WTC11 (cell line): ENCODE measurements at regions of chr14 and their contacts with region 1.

Region 1: GRCh38 chr14:103141119-103141796 is 18.0 kb downstream of the TNFAIP2 start:
- DNase-seq: peak; percentile 90
- ATAC-seq: peak; percentile 63
- H3K4me3 Mint-ChIP-seq: peak overlapping the region; percentile 33; the same call in 1 of the 2 replicates
- H3K27ac Mint-ChIP-seq: no peak overlapping the region
- H3K4me1 Mint-ChIP-seq: peaks cover 31% of the 10 kb centered on the region
- H3K27me3 Mint-ChIP-seq: peaks cover 21% of the 10 kb centered on the region
- CTCF ChIP-seq: peak; percentile 77

Region 2: DNA sequence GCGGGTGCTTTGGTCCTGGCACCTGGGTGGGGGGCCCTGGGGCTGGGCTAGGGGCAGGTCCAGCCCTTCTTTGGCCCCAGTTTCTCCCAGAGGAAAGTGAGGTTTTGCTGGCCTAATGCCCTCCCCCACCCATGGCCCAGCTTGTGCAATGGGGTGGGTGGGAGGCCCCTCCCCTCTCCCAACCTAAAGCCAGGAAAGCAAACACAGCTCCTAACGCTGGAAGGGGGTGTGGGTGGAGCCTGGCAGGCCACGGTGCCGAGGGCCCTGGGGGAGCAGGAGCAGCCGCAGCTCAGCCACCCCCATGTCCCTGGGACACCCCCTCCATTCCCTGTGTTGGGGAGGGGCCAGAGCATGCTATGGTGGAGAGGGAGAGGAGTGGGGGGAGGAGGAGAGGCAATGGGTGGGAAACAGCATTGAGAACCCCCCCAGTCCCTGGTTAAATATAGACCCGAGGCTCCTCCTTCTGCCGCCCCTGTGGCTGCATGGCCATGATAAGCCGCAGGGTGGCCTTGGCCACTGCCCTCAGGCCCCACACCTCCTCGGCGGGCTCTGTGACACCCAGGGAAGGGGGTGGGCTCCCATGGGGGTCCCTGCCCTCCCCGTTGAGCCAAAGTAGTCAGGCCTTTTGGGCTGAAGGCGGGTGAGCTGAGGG is 42.1 kb before region 1 on chr14:
- CTCF ChIA-PET with region 1: interaction called, 126 read pairs
- POLR2A ChIA-PET with region 1: no interaction called
- DNase-seq: peak; percentile 16
- ATAC-seq: peak; percentile 29
- H3K4me3 Mint-ChIP-seq: no peak overlapping the region
- H3K27ac Mint-ChIP-seq: no peak overlapping the region
- H3K4me1 Mint-ChIP-seq: peaks cover 15% of the 10 kb centered on the region
- H3K27me3 Mint-ChIP-seq: peaks cover 38% of the 10 kb centered on the region
- CTCF ChIP-seq: no peak

Region 3: GRCh38 chr14:103130965-103131364 is 10.3 kb before region 1 on chr14:
- CTCF ChIA-PET with region 1: interaction called, 32 read pairs
- POLR2A ChIA-PET with region 1: interaction called, 5 read pairs
- DNase-seq: no peak
- ATAC-seq: no peak
- H3K4me3 Mint-ChIP-seq: no peak overlapping the region
- H3K27ac Mint-ChIP-seq: no peak overlapping the region
- H3K4me1 Mint-ChIP-seq: peaks cover 15% of the 10 kb centered on the region
- H3K27me3 Mint-ChIP-seq: peaks cover 19% of the 10 kb centered on the region
- CTCF ChIP-seq: no peak

Region 4: DNA sequence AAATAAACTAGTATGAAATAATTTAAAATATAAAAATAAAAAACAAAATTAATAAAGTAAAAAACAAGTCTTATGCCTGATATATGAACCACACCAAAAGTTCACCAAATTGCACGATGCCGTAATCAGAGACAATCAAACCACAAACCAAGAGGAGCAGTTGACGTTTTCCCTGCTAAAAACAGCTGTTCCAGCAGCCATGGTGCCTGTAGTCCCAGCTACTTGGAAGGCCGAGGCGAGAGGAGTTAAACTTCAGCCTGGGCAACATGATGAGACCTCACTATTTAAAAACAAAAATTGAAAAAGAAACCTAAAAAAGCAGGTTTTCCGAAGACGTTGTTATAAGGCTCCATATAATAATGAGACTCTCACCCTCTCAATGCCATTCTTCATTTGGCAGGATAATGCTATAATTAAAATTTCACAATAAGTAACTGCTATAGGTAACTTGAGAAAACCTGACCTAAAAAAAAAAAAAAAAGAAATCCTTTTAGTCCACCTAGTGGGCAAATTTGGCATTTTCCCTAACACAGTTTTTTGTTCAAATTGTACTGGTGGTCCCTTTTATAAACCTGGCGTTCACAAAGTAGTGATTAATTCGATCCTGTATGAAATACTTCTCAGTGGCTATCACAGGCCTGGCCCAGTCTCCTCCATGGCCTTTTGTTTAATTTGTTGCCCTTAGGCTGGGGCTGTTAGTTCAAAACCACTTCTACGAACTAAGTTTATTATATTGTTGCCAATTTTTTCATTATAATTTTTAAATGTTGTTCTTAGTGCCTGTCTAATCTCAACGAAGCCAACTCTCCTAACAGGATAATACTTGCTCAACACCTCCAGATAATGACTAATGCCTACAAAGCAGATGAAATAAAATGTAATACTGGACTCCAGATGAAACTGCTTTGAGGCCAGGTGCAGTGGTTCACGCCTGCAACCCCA is 44.1 kb after region 1 on chr14:
- CTCF ChIA-PET with region 1: interaction called, 13 read pairs
- POLR2A ChIA-PET with region 1: no interaction called
- DNase-seq: no peak
- ATAC-seq: no peak
- H3K4me3 Mint-ChIP-seq: no peak overlapping the region
- H3K27ac Mint-ChIP-seq: peak overlapping the region; percentile 49; the same call in 1 of the 2 replicates
- H3K4me1 Mint-ChIP-seq: peaks cover 31% of the 10 kb centered on the region
- H3K27me3 Mint-ChIP-seq: peaks cover 27% of the 10 kb centered on the region
- CTCF ChIP-seq: peak; percentile 62